CD8-positive, alpha-beta T cell (primary cell): ENCODE measurements at regions of chr7 and their contacts with region 1.

Region 1: GRCh38 chr7:52786174-52786573 is 249.3 kb upstream of the POM121L12 start:
- DNase-seq: no peak
- ATAC-seq: no peak
- H3K4me3 ChIP-seq: no peak overlapping the region
- H3K4me3 Mint-ChIP-seq: no peak overlapping the region
- H3K27ac ChIP-seq: no peak overlapping the region
- H3K27ac Mint-ChIP-seq: no peak overlapping the region
- H3K4me1 ChIP-seq: no peaks in the 10 kb centered on the region
- H3K4me1 Mint-ChIP-seq: no peaks in the 10 kb centered on the region
- H3K27me3 ChIP-seq: no peaks in the 10 kb centered on the region
- H3K27me3 Mint-ChIP-seq: no peaks in the 10 kb centered on the region
- CTCF ChIP-seq: no peak

Region 2: DNA sequence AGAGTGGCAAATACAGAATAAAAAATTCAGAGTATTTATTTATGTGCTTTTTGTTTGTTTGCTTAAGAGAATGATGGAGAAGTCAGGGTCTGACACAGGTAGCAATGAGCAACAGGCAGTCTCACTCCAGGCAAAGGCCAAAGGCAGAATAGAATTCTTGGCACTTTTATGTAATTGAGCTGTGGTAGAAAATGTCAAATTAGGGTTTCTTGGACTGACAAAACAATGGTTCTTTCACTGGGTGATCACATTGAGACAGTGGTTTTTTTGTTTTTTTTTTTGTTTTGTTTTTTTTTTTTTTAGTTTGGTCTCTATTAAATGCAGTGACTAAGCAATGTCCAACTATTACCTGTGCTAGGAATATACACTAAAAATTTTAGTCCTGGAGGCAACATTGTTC is 276.6 kb after region 1 on chr7:
- CTCF ChIA-PET with region 1: no interaction called
- POLR2A ChIA-PET with region 1: no interaction called
- intact Hi-C with region 1: loop called in 1 of 2 experiments (anchors 10 kb)
- DNase-seq: no peak
- ATAC-seq: no peak
- H3K4me3 ChIP-seq: no peak overlapping the region
- H3K4me3 Mint-ChIP-seq: no peak overlapping the region
- H3K27ac ChIP-seq: no peak overlapping the region
- H3K27ac Mint-ChIP-seq: no peak overlapping the region
- H3K4me1 ChIP-seq: no peaks in the 10 kb centered on the region
- H3K4me1 Mint-ChIP-seq: no peaks in the 10 kb centered on the region
- H3K27me3 ChIP-seq: no peaks in the 10 kb centered on the region
- H3K27me3 Mint-ChIP-seq: no peaks in the 10 kb centered on the region
- CTCF ChIP-seq: no peak